B cell (primary cell): ENCODE measurements at regions of chr3 and their contacts with region 1.

Region 1: DNA sequence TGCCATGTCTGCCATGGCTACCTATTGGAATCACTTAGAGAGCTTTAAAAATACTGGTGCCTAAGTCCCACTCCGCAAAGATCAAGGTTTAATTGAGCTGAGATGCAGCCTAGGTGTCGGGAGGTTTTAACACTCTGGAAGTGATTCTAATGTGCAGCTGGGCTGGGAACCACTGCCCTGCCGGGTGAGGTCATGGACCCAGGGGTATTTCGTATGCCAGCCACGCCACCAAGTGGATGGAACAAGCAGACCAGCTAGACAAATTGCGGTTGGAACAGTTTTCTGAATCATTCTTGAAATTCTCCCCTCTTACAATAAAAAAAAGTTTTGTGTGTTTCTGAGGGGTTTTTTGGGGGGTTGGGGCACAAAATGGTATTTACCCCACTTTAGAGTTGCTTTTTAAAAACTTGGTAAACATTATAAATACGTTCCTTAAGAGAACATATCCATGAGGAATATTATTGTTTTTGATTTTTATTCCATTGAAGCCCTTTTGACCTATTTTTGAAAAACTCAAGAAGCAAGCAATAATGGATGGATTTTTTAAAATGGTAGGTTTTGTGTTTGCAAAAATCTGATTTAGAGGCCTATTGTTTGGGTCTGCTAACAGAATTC is 66.2 kb upstream of the CSTA start:
- DNase-seq: peak; percentile 77
- ATAC-seq: peak; percentile 92
- H3K4me3 ChIP-seq: no peak overlapping the region
- H3K4me3 Mint-ChIP-seq: no peak overlapping the region
- H3K27ac ChIP-seq: no peak overlapping the region
- H3K27ac Mint-ChIP-seq: no peak overlapping the region
- H3K4me1 ChIP-seq: peaks cover 0 to 3% of the 10 kb centered on the region in 2 donors
- H3K4me1 Mint-ChIP-seq: peaks cover 10% of the 10 kb centered on the region
- H3K27me3 ChIP-seq: no peaks in the 10 kb centered on the region
- H3K27me3 Mint-ChIP-seq: no peaks in the 10 kb centered on the region
- CTCF ChIP-seq: peak; percentile 76

Region 2: DNA sequence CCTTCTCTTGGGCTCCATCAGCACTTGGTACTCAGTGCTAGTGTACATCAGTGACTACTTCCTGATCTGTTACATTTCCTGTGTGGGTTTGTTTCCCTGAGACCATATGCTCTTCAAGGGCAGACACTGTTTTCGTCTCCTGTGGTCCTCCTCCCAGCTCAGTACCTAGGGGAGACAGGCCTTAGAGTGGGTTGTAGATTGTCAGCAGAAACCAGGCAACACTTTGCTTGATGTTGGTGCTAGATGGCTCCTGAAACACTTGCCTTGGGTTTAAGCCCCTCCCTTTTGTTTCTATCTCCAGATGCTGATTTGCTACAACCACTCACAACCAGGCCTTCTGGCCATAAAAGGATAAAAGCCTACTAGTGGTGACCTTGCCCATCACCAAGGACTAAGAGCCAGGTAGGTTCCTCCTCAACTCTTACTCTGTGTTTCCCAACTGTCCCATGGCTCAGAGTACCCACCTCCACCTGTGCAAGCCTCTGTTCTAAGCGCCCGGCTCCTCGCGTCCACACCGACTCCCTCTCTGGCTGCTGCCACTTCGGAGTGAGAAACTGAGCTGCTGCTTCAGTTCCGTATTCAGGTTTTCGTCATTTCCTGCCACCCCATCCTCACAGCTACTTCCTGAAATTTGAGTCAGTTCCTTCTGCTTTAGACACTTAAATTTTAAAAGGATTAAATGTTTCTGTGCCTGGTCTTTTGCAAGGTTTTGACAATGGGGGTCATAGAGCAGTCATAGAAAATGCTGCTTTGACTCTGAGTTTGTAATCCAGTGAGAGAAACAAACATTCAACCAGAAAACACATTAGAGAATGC is 598.3 kb before region 1 on chr3 and contains the start of gene HCLS1:
- CTCF ChIA-PET with region 1: interaction called, 3 read pairs
- POLR2A ChIA-PET with region 1: no interaction called
- intact Hi-C with region 1: loop called (anchors 2 kb)
- DNase-seq: peak; percentile 91
- ATAC-seq: peak; percentile 84
- H3K4me3 ChIP-seq: peak within 1 kb of the TSS; percentile 59 to 92 (median 68)
- H3K4me3 Mint-ChIP-seq: peak within 1 kb of the TSS; percentile 97
- H3K27ac ChIP-seq: peak within 1 kb of the TSS; percentile 90 to 94
- H3K27ac Mint-ChIP-seq: peak within 1 kb of the TSS; percentile 98
- H3K4me1 ChIP-seq: peaks cover 34 to 39% of the 10 kb centered on the region in 2 donors
- H3K4me1 Mint-ChIP-seq: peaks cover 54% of the 10 kb centered on the region
- H3K27me3 ChIP-seq: no peaks in the 10 kb centered on the region
- H3K27me3 Mint-ChIP-seq: no peaks in the 10 kb centered on the region
- CTCF ChIP-seq: no peak
- total RNA-seq, gene HCLS1: 317 and 331 TPM in 2 replicates

Region 3: DNA sequence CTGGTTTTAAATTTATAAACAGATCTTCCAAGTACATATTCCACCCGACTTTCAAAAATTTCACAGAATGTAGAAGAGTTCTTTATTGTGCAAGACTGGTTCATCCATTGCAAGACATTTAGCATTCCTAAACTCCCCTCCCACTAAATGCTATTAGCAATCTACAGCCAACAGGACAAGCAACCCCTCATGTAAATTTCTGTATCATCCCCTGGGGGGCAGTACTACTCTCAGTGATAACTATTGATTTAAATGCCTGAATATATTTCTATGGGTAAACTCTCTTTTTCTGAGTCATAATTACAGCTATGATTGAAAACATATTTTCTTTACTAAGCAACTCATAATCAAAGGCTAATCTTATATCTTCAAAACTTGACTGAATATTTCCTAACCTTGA is 375.4 kb before region 1 on chr3:
- CTCF ChIA-PET with region 1: interaction called, 31 read pairs
- POLR2A ChIA-PET with region 1: no interaction called
- intact Hi-C with region 1: loop called (anchors 1 kb)
- DNase-seq: peak; percentile 27
- ATAC-seq: no peak
- H3K4me3 ChIP-seq: no peak overlapping the region
- H3K4me3 Mint-ChIP-seq: no peak overlapping the region
- H3K27ac ChIP-seq: no peak overlapping the region
- H3K27ac Mint-ChIP-seq: peak overlapping the region; percentile 1
- H3K4me1 ChIP-seq: no peaks in the 10 kb centered on the region
- H3K4me1 Mint-ChIP-seq: peaks cover 16% of the 10 kb centered on the region
- H3K27me3 ChIP-seq: no peaks in the 10 kb centered on the region
- H3K27me3 Mint-ChIP-seq: no peaks in the 10 kb centered on the region
- CTCF ChIP-seq: peak; percentile 62

Region 4: DNA sequence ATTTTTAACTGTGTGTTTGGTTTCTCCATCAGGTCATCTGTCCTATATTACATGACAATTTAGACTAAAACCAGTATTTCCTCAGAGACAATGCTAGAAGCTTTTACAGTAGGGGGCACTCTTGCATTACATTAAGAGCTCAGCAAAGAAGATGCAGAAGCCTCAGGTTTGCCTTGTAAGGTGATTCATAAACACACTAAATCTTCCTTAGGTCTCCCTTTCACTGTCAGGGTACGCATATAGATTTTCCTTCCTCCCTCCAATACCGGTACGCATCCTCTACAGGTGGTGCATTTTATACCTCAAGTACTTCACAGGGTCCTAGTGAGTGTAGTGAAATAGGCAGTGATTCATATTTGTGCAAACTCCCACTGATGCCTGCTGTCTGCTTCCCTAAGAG is 157.2 kb before region 1 on chr3:
- CTCF ChIA-PET with region 1: interaction called, 145 read pairs
- POLR2A ChIA-PET with region 1: no interaction called
- intact Hi-C with region 1: loop called (anchors 1 kb)
- DNase-seq: peak; percentile 78
- ATAC-seq: peak; percentile 59
- H3K4me3 ChIP-seq: no peak overlapping the region
- H3K4me3 Mint-ChIP-seq: peak overlapping the region; percentile 82
- H3K27ac ChIP-seq: no peak overlapping the region
- H3K27ac Mint-ChIP-seq: peak overlapping the region; percentile 11
- H3K4me1 ChIP-seq: peaks cover 6 to 13% of the 10 kb centered on the region in 2 donors
- H3K4me1 Mint-ChIP-seq: peaks cover 24% of the 10 kb centered on the region
- H3K27me3 ChIP-seq: no peaks in the 10 kb centered on the region
- H3K27me3 Mint-ChIP-seq: no peaks in the 10 kb centered on the region
- CTCF ChIP-seq: peak; percentile 73

Region 5: GRCh38 chr3:122233101-122233952 is 25.5 kb before region 1 on chr3:
- CTCF ChIA-PET with region 1: interaction called, 23 read pairs
- POLR2A ChIA-PET with region 1: interaction called, 5 read pairs
- intact Hi-C with region 1: no loop called
- DNase-seq: peak; percentile 70
- ATAC-seq: peak; percentile 84
- H3K4me3 ChIP-seq: peak overlapping the region; percentile 11 to 62 (median 50)
- H3K4me3 Mint-ChIP-seq: peak overlapping the region; percentile 83
- H3K27ac ChIP-seq: peak overlapping the region; percentile 31 to 63
- H3K27ac Mint-ChIP-seq: peak overlapping the region; percentile 38
- H3K4me1 ChIP-seq: peaks cover 22 to 30% of the 10 kb centered on the region in 2 donors
- H3K4me1 Mint-ChIP-seq: peaks cover 31% of the 10 kb centered on the region
- H3K27me3 ChIP-seq: no peaks in the 10 kb centered on the region
- H3K27me3 Mint-ChIP-seq: peaks cover 4% of the 10 kb centered on the region
- CTCF ChIP-seq: no peak

Region 6: DNA sequence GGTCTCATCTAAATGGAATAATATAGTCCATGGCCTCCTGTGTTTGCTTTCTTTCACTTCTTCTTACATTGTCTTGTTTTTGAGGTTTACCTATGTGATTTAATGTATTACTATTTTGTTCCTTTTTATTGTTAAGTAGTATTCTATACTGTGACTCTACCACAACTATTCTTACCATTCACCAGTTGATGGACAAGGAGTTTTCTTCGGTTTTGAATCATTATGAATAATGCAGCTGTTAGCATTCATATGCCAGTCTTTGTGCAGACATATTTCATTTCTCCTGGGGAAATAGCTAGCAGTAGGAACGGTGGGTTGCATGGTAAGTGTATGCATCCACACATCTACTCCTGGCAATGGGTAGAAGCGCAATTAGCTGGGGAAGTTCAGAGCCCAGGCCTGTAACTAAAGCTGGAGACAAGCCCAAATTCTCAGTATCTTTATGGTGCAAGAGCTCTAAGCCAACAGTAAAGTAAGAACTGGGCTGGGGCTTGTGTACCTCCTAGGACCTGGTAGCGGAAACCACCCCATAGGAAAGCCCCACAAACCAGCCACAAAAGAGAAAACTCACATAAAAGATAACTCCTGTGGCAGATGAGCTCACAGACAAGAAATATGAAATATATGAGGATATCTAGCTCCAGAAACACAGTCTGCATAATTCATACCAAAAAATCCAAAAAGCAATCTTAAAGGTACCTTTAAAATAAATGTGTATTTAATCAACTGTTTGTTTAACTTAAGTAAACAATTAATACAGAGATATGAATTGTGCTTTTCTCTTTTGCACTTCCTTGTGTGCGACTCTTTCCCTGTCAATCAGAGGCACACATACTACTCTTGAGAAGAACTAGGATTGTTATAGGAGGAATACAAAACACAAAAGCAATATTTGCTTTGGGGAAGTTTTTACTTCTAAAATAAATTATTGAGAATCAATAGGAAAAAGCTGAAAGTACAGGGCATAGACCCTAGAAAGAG is 63.5 kb after region 1 on chr3:
- CTCF ChIA-PET with region 1: no interaction called
- POLR2A ChIA-PET with region 1: no interaction called
- intact Hi-C with region 1: no loop called
- DNase-seq: no peak
- ATAC-seq: no peak
- H3K4me3 ChIP-seq: no peak overlapping the region
- H3K4me3 Mint-ChIP-seq: no peak overlapping the region
- H3K27ac ChIP-seq: no peak overlapping the region
- H3K27ac Mint-ChIP-seq: no peak overlapping the region
- H3K4me1 ChIP-seq: no peaks in the 10 kb centered on the region
- H3K4me1 Mint-ChIP-seq: no peaks in the 10 kb centered on the region
- H3K27me3 ChIP-seq: no peaks in the 10 kb centered on the region
- H3K27me3 Mint-ChIP-seq: peaks cover 4% of the 10 kb centered on the region
- CTCF ChIP-seq: no peak